Activated naive CD4-positive, alpha-beta T cell treated with anti-CD3 and anti-CD28 coated beads for 36 hours (primary cell): ENCODE measurements at regions of chr19 and their contacts with region 1.

Region 1: GRCh38 chr19:4471403-4472173 is 509 bp upstream of the HDGFL2 start:
- DNase-seq: peak; percentile 99
- H3K4me3 Mint-ChIP-seq: no peak overlapping the region
- H3K27ac Mint-ChIP-seq: no peak overlapping the region
- H3K4me1 Mint-ChIP-seq: peaks cover 21% of the 10 kb centered on the region
- H3K27me3 Mint-ChIP-seq: no peaks in the 10 kb centered on the region

Region 2: DNA sequence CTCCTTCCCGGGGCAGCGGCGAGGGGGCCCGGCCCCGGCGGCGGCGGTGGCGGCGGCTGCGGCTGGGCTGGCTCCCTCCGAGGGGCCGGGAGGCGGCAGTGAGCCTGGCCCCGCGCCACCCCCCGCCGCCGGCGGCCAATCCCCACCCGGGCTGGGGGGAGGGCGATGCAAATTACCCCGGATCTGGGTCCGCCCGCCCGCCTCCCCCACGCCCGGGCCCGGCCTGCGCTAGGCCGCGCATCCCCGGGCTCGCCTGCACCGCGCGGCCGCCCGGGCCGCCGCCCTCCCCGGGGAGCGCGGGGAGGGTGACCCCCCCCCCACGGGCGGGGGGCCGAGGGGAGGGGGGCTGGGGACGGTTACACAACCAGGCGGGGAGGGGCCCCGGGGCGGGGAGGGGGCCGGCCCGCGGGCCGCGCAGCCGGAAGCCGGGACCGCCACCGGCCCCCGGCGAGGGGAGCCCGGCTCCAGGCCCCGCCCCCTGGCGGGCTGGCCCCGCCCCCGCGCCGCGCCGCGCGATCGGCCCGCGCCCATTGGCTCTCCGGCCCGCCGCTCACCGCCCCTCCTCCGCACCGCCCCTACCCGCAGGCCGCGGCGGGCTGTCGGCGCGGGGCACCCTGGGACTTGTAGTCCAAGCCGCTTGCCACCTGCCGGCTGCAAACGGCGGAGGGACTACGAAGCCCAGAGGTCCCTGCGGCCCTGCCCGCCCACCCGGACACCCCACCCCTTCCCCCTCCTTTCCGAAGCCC is 406.0 kb before region 1 on chr19:
- CTCF ChIA-PET with region 1: no interaction called
- intact Hi-C with region 1: loop called (anchors 5 kb)
- DNase-seq: peak; percentile 96
- H3K4me3 Mint-ChIP-seq: peak overlapping the region; percentile 56
- H3K27ac Mint-ChIP-seq: no peak overlapping the region
- H3K4me1 Mint-ChIP-seq: peaks cover 36% of the 10 kb centered on the region
- H3K27me3 Mint-ChIP-seq: no peaks in the 10 kb centered on the region

Region 3: DNA sequence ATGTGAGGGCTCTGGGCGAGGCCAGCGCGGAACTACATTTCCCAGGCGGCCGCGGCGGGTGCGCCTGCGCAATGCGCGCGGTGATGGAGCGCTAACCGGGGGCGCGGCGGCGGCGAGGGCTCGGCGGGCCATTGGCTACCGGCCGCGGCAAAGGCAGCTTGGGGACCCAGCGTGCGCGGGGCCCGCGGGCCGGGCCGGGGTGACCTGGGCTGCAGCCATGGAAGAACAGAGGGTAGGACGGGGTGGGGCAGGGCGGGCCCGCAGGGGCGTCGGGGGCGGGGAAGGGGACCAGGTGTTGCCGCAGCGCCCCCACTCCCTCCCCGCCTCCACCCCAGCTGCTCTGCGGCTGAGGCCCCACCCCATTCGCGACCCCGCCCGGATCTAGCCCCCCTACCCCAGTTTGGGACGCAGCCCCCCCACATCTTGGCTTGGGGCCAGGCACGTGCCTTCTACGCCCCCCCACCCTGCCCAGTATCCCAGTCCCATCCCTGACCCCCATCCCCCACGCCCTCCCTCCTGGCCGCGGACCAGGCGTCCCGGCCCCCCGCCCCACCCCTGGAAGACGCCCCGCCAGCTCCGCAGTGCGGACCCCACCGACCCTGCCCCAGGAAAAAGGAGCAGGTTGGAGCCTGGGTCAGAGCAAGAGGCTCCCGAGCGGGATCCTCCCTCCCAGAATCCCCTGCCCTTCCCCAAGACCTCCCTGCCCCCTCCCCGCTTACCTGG is 166.9 kb before region 1 on chr19 and contains the start of gene FSD1:
- CTCF ChIA-PET with region 1: no interaction called
- intact Hi-C with region 1: loop called (anchors 2 kb)
- DNase-seq: peak; percentile 79
- H3K4me3 Mint-ChIP-seq: peak within 1 kb of the TSS; percentile 71
- H3K27ac Mint-ChIP-seq: peak within 1 kb of the TSS; percentile 84
- H3K4me1 Mint-ChIP-seq: peaks cover 34% of the 10 kb centered on the region
- H3K27me3 Mint-ChIP-seq: no peaks in the 10 kb centered on the region
- total RNA-seq, gene FSD1: 12.3 to 17.5 TPM

Region 4: GRCh38 chr19:4400135-4400936 is 71.3 kb before region 1 on chr19 and contains the start of gene SH3GL1:
- CTCF ChIA-PET with region 1: interaction called, 10 read pairs
- intact Hi-C with region 1: loop called (anchors 1 kb)
- DNase-seq: peak; percentile 94
- H3K4me3 Mint-ChIP-seq: peak within 1 kb of the TSS; percentile 94
- H3K27ac Mint-ChIP-seq: peak within 1 kb of the TSS; percentile 93
- H3K4me1 Mint-ChIP-seq: peaks cover 73% of the 10 kb centered on the region
- H3K27me3 Mint-ChIP-seq: no peaks in the 10 kb centered on the region
- total RNA-seq, gene SH3GL1: 31.7 to 32.1 TPM

Region 5: DNA sequence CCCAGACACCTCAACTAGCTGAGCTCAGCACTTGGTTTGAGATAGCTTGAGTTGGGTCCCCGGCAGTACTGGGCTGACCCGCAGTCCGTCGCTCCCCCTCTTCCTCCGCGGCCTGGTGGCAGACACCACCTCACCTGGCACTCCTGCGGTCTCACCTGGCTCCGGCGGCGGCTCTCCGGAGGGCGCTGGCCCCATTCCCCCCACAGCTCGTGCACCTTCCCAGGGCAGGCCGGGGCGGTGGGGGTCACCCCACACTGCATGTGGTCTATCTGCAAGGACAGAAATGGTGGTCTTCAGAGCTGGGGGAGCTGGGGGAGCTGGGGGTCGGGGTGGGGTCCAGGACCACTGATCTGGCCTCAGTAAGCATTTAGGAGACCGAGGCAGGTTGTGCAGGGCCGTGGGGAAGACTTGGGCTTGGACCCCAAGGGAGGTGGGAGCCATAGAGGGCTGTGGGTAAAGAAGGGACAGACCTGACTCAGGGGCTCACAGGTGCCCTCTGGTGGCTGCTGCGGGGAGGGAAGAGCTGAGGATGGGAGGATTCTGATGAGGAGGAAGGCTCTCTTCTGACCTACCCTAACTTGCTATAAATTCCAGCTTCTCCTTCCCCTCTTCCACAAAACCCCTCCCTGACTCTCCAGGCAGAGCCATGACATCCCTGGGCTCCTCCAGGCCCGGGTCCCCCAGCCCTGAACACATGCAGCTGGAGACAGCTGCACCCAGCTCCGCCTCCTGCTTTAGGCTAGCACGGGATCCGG is 53.4 kb after region 1 on chr19:
- CTCF ChIA-PET with region 1: interaction called, 5 read pairs
- intact Hi-C with region 1: loop called (anchors 1 kb)
- DNase-seq: peak; percentile 84
- H3K4me3 Mint-ChIP-seq: no peak overlapping the region
- H3K27ac Mint-ChIP-seq: no peak overlapping the region
- H3K4me1 Mint-ChIP-seq: no peaks in the 10 kb centered on the region
- H3K27me3 Mint-ChIP-seq: no peaks in the 10 kb centered on the region

Region 6: DNA sequence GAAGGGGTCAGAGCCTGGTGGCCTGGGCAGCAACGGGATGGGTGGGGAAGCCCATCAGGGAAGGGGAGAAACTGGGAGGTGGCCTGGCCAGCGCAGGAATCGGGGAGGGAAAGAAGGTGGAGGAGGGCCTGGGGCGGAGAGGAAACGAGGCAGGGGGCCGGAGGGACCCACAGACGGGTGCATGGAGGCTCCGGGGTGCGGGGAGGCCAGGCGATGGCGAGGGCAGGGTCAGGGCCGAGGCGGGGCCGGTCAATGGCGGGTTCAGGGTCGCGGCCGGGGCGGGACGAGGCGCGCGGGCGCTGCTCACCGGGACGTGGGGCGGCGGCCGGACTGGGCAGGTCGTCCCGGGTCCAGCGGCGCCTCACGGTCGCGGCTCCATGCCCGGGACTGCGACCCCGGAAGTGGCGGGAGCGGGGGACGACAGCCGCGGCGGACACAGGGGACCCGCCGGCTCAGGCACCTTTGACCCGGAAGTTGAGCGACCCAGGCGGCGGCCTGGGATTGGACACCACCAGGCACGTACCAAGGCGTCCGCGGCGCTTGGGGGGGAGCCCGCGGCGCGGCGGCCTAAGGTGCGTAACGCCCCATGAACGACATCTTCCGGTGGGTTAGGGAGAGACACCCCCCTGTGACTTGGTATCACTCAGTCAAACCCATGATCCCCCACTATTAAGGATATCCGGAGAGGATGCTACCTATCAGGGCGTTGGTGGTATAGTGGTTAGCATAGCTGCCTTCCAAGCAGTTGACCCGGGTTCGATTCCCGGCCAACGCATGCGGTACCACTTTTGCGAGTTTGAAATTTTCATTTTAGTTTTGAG is 252.0 kb after region 1 on chr19 and contains the start of gene DPP9:
- CTCF ChIA-PET with region 1: no interaction called
- intact Hi-C with region 1: loop called (anchors 5 kb)
- DNase-seq: peak; percentile 98
- H3K4me3 Mint-ChIP-seq: peak within 1 kb of the TSS; percentile 91
- H3K27ac Mint-ChIP-seq: peak within 1 kb of the TSS; percentile 97
- H3K4me1 Mint-ChIP-seq: peaks cover 22% of the 10 kb centered on the region
- H3K27me3 Mint-ChIP-seq: peaks cover 3% of the 10 kb centered on the region
- total RNA-seq, gene DPP9: 40.8 to 41.9 TPM